Head of caudate nucleus (tissue), 42 donors: ENCODE measurements at regions of chr13 and their contacts with region 1.

Region 1: DNA sequence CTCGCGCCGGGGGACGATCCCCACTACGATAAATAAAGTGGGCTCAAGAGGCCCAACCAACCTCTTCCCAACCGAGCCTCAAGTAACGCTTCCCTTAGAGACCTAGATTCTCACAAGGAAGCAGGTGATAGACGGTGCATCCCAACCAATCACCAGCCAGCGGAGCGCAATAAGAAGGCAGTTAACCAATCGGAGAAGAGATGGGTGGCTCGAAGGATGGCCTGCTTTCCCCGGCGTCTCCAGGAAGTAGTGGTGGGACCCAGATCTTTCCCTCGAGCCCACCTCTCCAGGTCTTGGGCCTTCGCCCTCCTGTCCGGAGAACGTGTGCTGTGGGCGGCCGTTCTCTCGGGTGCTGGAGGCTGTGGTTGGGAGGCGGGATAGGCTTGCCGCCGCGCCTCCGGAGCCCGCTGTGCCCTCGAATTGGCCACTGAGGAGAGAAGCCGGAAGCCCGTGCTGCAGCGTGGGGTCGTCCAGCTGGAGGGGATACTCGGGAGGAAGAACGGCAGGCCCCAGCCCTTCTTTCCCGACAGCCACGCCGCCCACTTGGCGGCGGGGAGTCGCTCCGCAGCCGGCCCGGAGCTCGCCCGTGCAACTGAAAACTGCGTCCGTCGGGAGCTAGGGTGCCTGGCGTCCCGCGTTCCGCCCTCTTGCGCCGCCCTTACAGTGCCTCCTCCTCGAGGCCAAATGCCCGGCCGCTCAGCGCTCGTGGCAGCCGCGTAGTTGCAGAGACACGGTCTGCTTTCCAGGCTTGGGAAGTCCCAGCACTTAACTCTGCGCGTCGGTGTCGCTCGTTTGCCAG is at the start of gene RNF6:
- DNase-seq: peak; percentile 83 to 98 (median 95)

Region 2: GRCh38 chr13:26253787-26254582 is 32.1 kb after region 1 on chr13 and contains the start of gene CDK8:
- intact Hi-C with region 1: loop called (anchors 2 kb)
- DNase-seq: peak; percentile 89 to 97 (median 93)

Region 3: GRCh38 chr13:26557393-26558023 is 335.6 kb after region 1 on chr13 and contains the start of gene WASF3:
- intact Hi-C with region 1: loop called (anchors 5 kb)
- DNase-seq: peak; percentile 92 to 99 (median 97)